Posterior cingulate gyrus (tissue), 11 donors: ENCODE measurements at regions of chr2 and their contacts with region 1.

Region 1: GRCh38 chr2:235384624-235385023 is 109.2 kb upstream of the AGAP1 start:
- DNase-seq: peak; percentile 70 to 97 (median 85)

Region 2: GRCh38 chr2:235244255-235245220 is 140.1 kb before region 1 on chr2:
- intact Hi-C with region 1: no loop called
- DNase-seq: peak in 2 of 10 donors; percentile 73 to 77

Region 3: GRCh38 chr2:235263205-235264122 is 121.2 kb before region 1 on chr2:
- intact Hi-C with region 1: loop called (anchors 10 kb)
- DNase-seq: peak; percentile 57 to 96 (median 80)

Region 4: GRCh38 chr2:235698028-235698427 is 313.4 kb after region 1 on chr2:
- intact Hi-C with region 1: no loop called
- DNase-seq: peak in 3 of 10 donors; percentile 13 to 67 (median 65)